Mammary epithelial cell (primary cell): ENCODE measurements at regions of chr3 and their contacts with region 1.

Region 1: DNA sequence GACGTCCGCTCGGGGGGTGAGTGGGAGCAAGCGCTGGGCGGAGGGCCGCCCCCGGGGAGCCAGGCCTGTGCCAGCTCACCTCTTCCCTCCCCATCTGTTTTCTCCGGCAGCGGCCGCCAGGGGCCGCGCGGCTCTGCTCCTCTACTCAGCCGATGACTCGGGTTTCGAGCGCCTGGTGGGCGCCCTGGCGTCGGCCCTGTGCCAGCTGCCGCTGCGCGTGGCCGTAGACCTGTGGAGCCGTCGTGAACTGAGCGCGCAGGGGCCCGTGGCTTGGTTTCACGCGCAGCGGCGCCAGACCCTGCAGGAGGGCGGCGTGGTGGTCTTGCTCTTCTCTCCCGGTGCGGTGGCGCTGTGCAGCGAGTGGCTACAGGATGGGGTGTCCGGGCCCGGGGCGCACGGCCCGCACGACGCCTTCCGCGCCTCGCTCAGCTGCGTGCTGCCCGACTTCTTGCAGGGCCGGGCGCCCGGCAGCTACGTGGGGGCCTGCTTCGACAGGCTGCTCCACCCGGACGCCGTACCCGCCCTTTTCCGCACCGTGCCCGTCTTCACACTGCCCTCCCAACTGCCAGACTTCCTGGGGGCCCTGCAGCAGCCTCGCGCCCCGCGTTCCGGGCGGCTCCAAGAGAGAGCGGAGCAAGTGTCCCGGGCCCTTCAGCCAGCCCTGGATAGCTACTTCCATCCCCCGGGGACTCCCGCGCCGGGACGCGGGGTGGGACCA is 632 bp upstream of the CRELD1 start:
- DNase-seq: peak; percentile 64
- H3K4me3 ChIP-seq: peak overlapping the region; percentile 66 to 91 (median 79)
- H3K27ac ChIP-seq: no peak overlapping the region
- H3K4me1 ChIP-seq: peaks cover 20% of the 10 kb centered on the region
- H3K27me3 ChIP-seq: no peaks in the 10 kb centered on the region
- CTCF ChIP-seq: peak; percentile 36 to 85

Region 2: GRCh38 chr3:9569054-9569453 is 363.9 kb before region 1 on chr3:
- CTCF ChIA-PET with region 1: no interaction called
- dilution Hi-C with region 1: no loop called
- in situ Hi-C with region 1: no loop called
- intact Hi-C with region 1: no loop called
- DNase-seq: no peak
- H3K4me3 ChIP-seq: no peak overlapping the region
- H3K27ac ChIP-seq: no peak overlapping the region
- H3K4me1 ChIP-seq: no peaks in the 10 kb centered on the region
- H3K27me3 ChIP-seq: peaks cover 2% of the 10 kb centered on the region
- CTCF ChIP-seq: no peak

Region 3: GRCh38 chr3:9826815-9827567 is 106.0 kb before region 1 on chr3:
- CTCF ChIA-PET with region 1: no interaction called
- dilution Hi-C with region 1: no loop called
- in situ Hi-C with region 1: no loop called
- intact Hi-C with region 1: no loop called
- DNase-seq: no peak
- H3K4me3 ChIP-seq: no peak overlapping the region
- H3K27ac ChIP-seq: no peak overlapping the region
- H3K4me1 ChIP-seq: no peaks in the 10 kb centered on the region
- H3K27me3 ChIP-seq: no peaks in the 10 kb centered on the region
- CTCF ChIP-seq: peak; percentile 25 to 27

Region 4: DNA sequence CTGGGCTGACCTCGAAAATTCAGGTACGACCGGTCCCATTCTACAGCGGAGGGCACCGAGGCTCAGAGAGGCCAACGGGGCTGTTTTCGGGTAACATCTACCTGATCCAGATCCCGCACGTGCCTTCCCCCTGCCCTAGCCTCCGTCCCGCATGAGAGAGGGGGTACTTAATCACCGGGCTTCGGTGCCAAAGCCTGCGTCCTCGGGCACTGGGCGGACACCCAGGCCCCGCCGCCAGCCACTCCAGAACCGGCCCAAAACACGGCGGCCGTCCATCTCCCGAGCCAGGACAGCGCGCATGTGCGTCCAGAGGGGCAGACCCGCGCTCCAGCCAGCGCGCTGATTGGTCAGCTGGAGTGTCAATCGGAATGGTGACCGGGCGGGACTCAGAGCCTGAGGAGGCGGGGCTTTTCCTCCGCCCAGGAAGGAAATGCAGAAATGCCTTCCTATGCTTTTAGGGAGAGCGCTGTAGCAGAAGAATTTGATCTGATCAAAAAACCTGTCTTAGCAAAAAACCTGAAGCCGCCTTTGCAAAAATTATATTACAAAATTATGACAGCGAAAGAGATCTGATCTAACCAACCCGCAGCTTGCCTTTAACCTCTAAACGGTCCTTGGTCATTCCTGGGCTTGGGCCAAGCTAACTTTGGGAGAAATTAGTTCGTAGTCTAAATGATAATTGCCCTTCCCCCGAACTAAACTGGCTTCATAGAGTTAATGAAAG is 89.1 kb before region 1 on chr3 and contains the start of gene RPUSD3:
- CTCF ChIA-PET with region 1: no interaction called
- dilution Hi-C with region 1: no loop called
- in situ Hi-C with region 1: no loop called
- intact Hi-C with region 1: loop called (anchors 2 kb)
- DNase-seq: peak; percentile 92
- H3K4me3 ChIP-seq: peak within 1 kb of the TSS; percentile 62 to 68 (median 67)
- H3K27ac ChIP-seq: peak within 1 kb of the TSS; percentile 29
- H3K4me1 ChIP-seq: peaks cover 16% of the 10 kb centered on the region
- H3K27me3 ChIP-seq: no peaks in the 10 kb centered on the region
- CTCF ChIP-seq: no peak
- total RNA-seq, gene RPUSD3: 35.0 to 40.8 TPM

Region 5: GRCh38 chr3:9852549-9852948 is 80.5 kb before region 1 on chr3:
- CTCF ChIA-PET with region 1: no interaction called
- dilution Hi-C with region 1: loop called (anchors 5 kb)
- in situ Hi-C with region 1: no loop called
- intact Hi-C with region 1: loop called (anchors 2 kb)
- DNase-seq: no peak
- H3K4me3 ChIP-seq: no peak overlapping the region
- H3K27ac ChIP-seq: no peak overlapping the region
- H3K4me1 ChIP-seq: peaks cover 5% of the 10 kb centered on the region
- H3K27me3 ChIP-seq: no peaks in the 10 kb centered on the region
- CTCF ChIP-seq: peak in 1 of 2 donors; percentile 24

Region 6: GRCh38 chr3:9890249-9891071 is 42.5 kb before region 1 on chr3 and contains the start of gene JAGN1:
- CTCF ChIA-PET with region 1: interaction called, 5 read pairs
- dilution Hi-C with region 1: no loop called
- in situ Hi-C with region 1: no loop called
- intact Hi-C with region 1: loop called (anchors 2 kb)
- DNase-seq: peak; percentile 84
- H3K4me3 ChIP-seq: peak within 1 kb of the TSS; percentile 65 to 96 (median 90)
- H3K27ac ChIP-seq: peak within 1 kb of the TSS; percentile 94
- H3K4me1 ChIP-seq: peaks cover 16% of the 10 kb centered on the region
- H3K27me3 ChIP-seq: no peaks in the 10 kb centered on the region
- CTCF ChIP-seq: no peak
- total RNA-seq, gene JAGN1: 32.3 to 34.7 TPM

Region 7: GRCh38 chr3:9915254-9916141 is 17.5 kb before region 1 on chr3:
- CTCF ChIA-PET with region 1: interaction called, 21 read pairs
- dilution Hi-C with region 1: no loop called
- in situ Hi-C with region 1: no loop called
- intact Hi-C with region 1: loop called (anchors 2 kb)
- DNase-seq: no peak
- H3K4me3 ChIP-seq: no peak overlapping the region
- H3K27ac ChIP-seq: no peak overlapping the region
- H3K4me1 ChIP-seq: peaks cover 34% of the 10 kb centered on the region
- H3K27me3 ChIP-seq: no peaks in the 10 kb centered on the region
- CTCF ChIP-seq: no peak

Region 8: DNA sequence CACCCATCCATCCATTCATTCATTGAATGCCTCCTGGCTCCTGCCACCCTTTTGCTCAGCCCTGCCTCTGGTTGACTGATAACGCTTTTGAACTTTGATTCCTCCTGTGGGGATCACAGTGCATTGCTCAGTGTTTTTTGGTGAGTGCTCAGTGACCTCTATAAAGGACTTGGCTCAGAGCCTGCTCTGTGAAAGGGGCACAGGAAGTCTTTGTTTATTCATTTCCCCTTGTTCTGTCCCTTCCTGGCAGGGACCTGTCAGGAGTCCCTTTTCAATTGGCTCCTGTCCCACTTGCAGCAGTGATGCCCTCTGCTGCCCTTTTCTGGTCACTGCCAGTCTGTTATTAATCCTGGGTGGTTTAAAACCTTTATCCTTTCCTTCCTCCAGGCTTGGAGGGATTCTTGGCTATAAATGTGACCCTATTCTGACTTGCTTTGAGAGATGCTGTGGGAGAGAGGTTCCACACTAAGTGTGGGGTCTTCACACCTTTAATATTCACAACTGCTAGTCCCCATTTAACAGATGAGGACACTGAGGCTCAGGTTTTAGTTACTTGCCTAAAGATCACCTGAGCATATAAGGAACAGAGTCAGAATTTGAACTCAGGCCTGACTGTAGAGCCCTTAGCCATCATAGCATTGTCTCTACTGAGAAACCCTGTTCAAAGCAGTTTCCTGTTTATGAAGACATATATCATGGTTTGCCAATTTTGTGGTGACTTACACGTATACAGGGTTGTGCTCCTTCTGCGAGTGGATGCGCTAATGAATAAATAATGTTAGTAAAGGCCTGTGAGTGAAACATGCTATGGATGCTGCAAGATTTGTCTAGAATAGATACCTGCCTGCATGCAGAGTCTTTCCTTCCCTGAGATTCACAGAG is 292.0 kb after region 1 on chr3:
- CTCF ChIA-PET with region 1: no interaction called
- dilution Hi-C with region 1: no loop called
- in situ Hi-C with region 1: no loop called
- intact Hi-C with region 1: loop called (anchors 2 kb)
- DNase-seq: peak; percentile 64
- H3K4me3 ChIP-seq: no peak overlapping the region
- H3K27ac ChIP-seq: no peak overlapping the region
- H3K4me1 ChIP-seq: peaks cover 20% of the 10 kb centered on the region
- H3K27me3 ChIP-seq: no peaks in the 10 kb centered on the region
- CTCF ChIP-seq: peak; percentile 84 to 85

Region 9: GRCh38 chr3:10322352-10322710 is 389.3 kb after region 1 on chr3:
- CTCF ChIA-PET with region 1: no interaction called
- dilution Hi-C with region 1: no loop called
- in situ Hi-C with region 1: no loop called
- intact Hi-C with region 1: loop called (anchors 5 kb)
- DNase-seq: peak; percentile 9
- H3K4me3 ChIP-seq: no peak overlapping the region
- H3K27ac ChIP-seq: no peak overlapping the region
- H3K4me1 ChIP-seq: peaks cover 9% of the 10 kb centered on the region
- H3K27me3 ChIP-seq: no peaks in the 10 kb centered on the region
- CTCF ChIP-seq: peak; percentile 46 to 52